ENCODE measurements at regions of chr14 and their contacts with region 1.

Region 1: GRCh38 chr14:38721822-38722431 is 381.1 kb downstream of the SEC23A start:
- DNase-seq: peak; percentile 48
- H3K4me3 ChIP-seq: no peak overlapping the region
- H3K27ac ChIP-seq: peak overlapping the region in 1 of 2 donors; percentile 21
- H3K4me1 ChIP-seq: no peaks in the 10 kb centered on the region
- H3K27me3 ChIP-seq: no peaks in the 10 kb centered on the region
- CTCF ChIP-seq: peak in 3 of 4 experiments; percentile 55 to 80 (median 66)
- POLR2A ChIP-seq: no peak

Region 2: DNA sequence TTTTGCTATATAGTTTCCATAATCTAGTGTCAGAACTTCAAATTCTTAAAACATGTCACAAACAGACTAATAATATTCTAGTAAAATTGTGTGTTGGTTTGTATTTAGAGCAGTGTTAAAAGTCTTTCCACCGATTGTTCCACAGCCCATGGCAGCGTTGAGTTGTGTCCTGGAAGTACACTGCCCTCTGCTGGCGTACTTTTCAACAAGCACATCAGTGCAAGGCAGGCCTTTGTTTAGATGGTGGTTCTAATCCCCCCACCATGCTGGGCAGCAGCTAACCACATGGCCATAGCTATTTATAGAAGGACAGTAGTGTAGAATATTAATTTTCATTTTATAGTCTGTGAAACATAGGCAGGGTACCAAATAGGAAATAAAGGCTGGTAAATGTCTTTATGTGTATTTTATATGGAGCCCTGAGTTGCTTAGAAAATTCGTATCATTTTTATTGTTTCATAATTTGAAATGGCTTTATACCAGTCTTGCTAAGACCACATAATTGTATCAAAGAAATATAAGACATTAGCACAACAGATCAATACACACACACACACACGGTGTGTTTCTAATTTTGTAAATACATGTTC is 145.7 kb after region 1 on chr14:
- intact Hi-C with region 1: loop called (anchors 2 kb)
- DNase-seq: peak; percentile 68
- H3K4me3 ChIP-seq: no peak overlapping the region
- H3K27ac ChIP-seq: no peak overlapping the region
- H3K4me1 ChIP-seq: peaks cover 5% of the 10 kb centered on the region
- H3K27me3 ChIP-seq: no peaks in the 10 kb centered on the region
- CTCF ChIP-seq: peak; percentile 11 to 77 (median 66)
- POLR2A ChIP-seq: no peak

Region 3: DNA sequence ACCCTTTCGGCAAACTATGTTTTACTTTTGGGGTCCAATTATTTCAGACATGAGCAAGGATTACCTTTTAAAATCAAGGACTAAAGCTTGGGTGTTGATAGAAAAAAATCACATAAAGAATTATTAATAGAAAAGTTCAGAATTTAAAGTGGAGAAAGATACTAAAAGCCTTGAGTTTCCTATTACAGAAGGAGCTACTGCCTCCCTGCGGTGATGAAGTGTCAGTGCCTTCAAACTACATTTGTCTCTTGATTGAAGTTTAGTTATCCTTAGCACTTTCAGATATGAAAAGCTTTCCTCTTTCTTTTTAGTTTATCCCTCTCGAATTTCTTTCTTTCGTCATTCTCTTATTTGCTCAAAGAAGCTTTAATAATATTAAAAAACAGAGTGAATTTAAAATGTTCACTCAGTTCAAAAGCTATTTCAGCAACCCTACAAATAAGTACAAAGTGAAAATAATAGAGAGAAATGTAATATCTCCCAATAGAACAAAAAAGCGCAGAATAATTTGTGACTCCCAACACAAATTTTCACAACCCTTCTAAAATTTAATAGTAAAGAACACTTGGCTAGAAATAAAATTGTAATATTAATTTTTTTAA is 293.5 kb after region 1 on chr14:
- intact Hi-C with region 1: loop called (anchors 5 kb)
- DNase-seq: no peak
- H3K4me3 ChIP-seq: no peak overlapping the region
- H3K27ac ChIP-seq: no peak overlapping the region
- H3K4me1 ChIP-seq: no peaks in the 10 kb centered on the region
- H3K27me3 ChIP-seq: no peaks in the 10 kb centered on the region
- CTCF ChIP-seq: peak; percentile 27 to 69 (median 49)
- POLR2A ChIP-seq: no peak

Measured in prostate gland (tissue), 2 donors.